ENCODE measurements at regions of chr10 and their contacts with region 1.

Region 1: DNA sequence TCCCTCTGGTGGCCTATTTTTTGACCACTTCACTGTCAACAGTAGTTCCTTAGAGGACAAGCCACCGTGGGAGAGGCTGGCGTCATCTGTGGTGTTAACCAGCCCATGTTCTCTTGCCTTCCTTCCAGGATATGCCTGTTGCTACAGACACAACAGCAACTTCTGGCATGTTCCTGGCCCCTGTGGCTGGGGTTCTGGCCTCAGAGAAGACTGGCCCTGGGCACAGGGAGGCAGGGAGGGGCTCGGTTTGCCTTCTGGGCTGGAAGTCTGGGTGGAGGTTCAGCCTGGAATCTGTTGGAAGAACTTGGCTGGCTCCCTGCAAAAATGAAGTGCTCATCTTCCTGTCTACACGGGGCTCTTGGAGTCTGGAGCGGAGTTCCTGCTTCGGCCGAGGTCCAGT is 25.7 kb downstream of the GOLGA7B start:
- DNase-seq: no peak
- ATAC-seq: no peak
- H3K4me3 Mint-ChIP-seq: no peak overlapping the region
- H3K27ac Mint-ChIP-seq: peak overlapping the region in 1 of 10 donors; percentile 40
- H3K4me1 Mint-ChIP-seq: no peaks in the 10 kb centered on the region
- H3K27me3 Mint-ChIP-seq: peaks cover 0 to 11% (median 1%) of the 10 kb centered on the region in 5 donors

Region 2: GRCh38 chr10:97522071-97522470 is 353.3 kb before region 1 on chr10:
- POLR2A ChIA-PET with region 1: interaction called, 15 read pairs
- DNase-seq: no peak
- ATAC-seq: no peak
- H3K4me3 Mint-ChIP-seq: no peak overlapping the region
- H3K27ac Mint-ChIP-seq: no peak overlapping the region
- H3K4me1 Mint-ChIP-seq: no peaks in the 10 kb centered on the region
- H3K27me3 Mint-ChIP-seq: peaks cover 2 to 8% (median 4%) of the 10 kb centered on the region in 5 donors

Region 3: GRCh38 chr10:97822261-97822687 is 53.1 kb before region 1 on chr10:
- POLR2A ChIA-PET with region 1: no interaction called
- DNase-seq: no peak
- ATAC-seq: no peak
- H3K4me3 Mint-ChIP-seq: no peak overlapping the region
- H3K27ac Mint-ChIP-seq: no peak overlapping the region
- H3K4me1 Mint-ChIP-seq: peaks cover 0 to 8% (median 0%) of the 10 kb centered on the region in 4 donors
- H3K27me3 Mint-ChIP-seq: peaks cover 0 to 1% (median 0%) of the 10 kb centered on the region in 5 donors

Region 4: DNA sequence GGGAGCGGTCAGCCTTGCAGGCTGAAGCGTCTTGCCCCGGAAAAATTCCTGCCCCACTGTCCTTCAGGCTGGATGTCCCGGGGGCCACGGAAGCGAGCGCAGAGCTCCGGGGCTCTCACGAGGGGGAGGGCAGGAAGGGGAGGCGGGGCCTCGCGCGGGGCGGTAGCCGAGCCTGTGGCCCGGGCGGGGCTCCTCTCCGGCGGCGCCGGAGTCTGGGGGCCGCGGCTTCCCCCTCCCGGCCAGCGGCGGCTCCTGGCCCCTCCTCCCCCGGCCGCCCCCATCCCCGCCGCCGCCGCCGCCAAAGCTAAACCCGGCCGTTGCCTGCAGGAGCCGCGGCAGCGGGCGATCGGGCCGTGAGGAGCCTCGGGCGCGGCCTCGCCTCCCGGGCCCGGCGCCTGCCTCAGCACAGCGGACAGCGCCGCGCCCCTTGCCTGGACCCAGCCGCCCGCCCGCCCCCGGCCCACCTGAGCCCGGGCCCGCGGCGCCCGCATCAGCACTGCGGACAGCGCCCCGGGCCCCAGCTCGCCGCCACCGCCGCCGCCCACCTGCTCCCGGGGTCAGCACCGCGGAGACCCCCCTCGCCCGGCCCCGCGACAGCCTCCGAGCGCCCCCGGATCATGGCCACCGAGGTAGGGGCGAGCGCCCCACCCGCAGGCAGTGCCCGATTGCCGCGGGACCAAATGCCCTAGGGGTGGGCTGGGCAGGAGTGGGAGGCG is 25.5 kb before region 1 on chr10 and contains the start of gene GOLGA7B:
- POLR2A ChIA-PET with region 1: no interaction called
- DNase-seq: peak; percentile 42 to 78 (median 66)
- ATAC-seq: peak; percentile 77 to 81
- H3K4me3 Mint-ChIP-seq: peak within 1 kb of the TSS; percentile 80 to 95 (median 92)
- H3K27ac Mint-ChIP-seq: peak within 1 kb of the TSS; percentile 71 to 94 (median 84)
- H3K4me1 Mint-ChIP-seq: peaks cover 31 to 41% (median 39%) of the 10 kb centered on the region in 4 donors
- H3K27me3 Mint-ChIP-seq: peaks cover 0 to 3% (median 0%) of the 10 kb centered on the region in 5 donors
- polyA plus RNA-seq, gene GOLGA7B: 0.35 to 0.61 (median 0.44) TPM

Region 5: DNA sequence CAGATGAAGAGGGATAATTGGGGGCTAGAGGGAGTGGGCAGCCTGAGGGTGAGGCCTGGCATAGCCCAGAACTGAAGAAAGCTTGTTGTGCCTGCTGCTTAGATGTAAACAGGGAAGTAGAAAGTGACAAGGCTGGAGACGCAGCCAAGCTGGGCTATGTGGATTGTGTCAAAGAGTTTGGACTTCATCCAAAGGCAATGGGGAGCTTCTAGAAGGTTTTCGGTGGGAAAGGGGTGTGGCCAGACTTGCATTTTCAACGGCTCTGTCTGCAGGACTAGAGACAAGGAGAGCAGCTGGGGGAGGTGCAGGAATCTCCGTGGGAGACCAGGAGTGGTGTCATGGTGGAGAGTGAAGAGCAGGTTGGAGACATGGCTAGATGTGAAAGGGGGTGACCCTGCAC is 23.0 kb after region 1 on chr10:
- POLR2A ChIA-PET with region 1: no interaction called
- DNase-seq: no peak
- ATAC-seq: no peak
- H3K4me3 Mint-ChIP-seq: no peak overlapping the region
- H3K27ac Mint-ChIP-seq: no peak overlapping the region
- H3K4me1 Mint-ChIP-seq: no peaks in the 10 kb centered on the region
- H3K27me3 Mint-ChIP-seq: peaks cover 0 to 20% (median 6%) of the 10 kb centered on the region in 5 donors

Measured in naive thymus-derived CD8-positive, alpha-beta T cell (primary cell).